ENCODE measurements at regions of chr3 and their contacts with region 1.

Region 1: GRCh38 chr3:51941798-51942602 is at the starts of genes PARP3 and RRP9:
- DNase-seq: peak; percentile 100
- H3K4me3 Mint-ChIP-seq: peak within 1 kb of the TSS; percentile 87
- H3K27ac Mint-ChIP-seq: peak within 1 kb of the TSS; percentile 83
- H3K4me1 Mint-ChIP-seq: peaks cover 29% of the 10 kb centered on the region
- H3K27me3 Mint-ChIP-seq: no peaks in the 10 kb centered on the region
- total RNA-seq, gene PARP3: 12.1 to 13.4 TPM
- total RNA-seq, gene RRP9: 32.3 to 35.4 TPM

Region 2: DNA sequence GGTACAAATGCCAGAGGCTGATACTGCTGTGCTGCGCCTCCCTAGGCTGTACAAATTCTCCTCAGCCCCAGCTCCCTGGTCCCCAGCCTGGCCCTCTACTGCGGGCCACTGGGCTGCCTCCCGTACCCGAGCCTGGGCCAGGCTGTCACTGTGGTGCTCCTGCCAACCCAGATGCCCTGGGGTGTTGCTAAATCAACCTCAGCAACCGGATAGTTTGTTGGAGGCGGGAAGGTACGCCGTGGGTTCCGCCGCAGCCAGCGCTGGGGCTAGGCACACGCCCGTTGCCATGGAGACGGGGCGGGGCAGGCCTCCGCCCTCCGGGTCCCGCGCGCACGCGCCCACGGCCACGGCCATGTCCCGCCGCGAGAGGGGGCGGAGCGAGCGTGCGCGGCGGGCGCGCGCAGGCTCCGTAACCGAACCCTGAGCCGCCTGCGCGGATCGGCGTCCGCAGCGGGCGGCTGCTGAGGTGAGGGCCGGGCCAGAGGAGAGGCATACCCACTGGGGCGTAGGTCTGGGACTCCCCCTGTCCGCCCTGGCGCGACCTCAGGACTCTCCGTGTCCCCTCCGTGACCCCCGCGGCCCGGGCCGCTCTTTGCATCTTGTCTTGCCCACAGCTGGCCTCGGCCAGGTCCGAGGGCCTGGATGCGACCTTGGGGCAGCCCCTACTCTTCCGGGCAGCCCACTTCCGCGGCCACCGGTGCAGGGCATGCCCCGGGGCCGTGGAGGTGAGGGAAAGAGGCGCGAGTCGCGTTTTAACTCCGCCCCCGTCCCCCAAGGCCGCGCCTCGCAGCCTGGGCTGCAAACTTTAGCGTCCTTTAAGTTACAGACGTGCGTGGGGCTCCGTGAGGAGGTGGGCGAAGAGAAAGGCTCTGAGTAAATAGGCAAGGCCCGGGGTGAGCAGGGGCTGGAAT is 270.9 kb before region 1 on chr3 and contains the start of gene TEX264:
- CTCF ChIA-PET with region 1: no interaction called
- POLR2A ChIA-PET with region 1: no interaction called
- intact Hi-C with region 1: loop called (anchors 10 kb)
- DNase-seq: peak; percentile 92
- H3K4me3 Mint-ChIP-seq: peak within 1 kb of the TSS; percentile 87
- H3K27ac Mint-ChIP-seq: peak within 1 kb of the TSS; percentile 89
- H3K4me1 Mint-ChIP-seq: peaks cover 62% of the 10 kb centered on the region
- H3K27me3 Mint-ChIP-seq: no peaks in the 10 kb centered on the region
- total RNA-seq, gene TEX264: 44.9 to 45.2 TPM

Region 3: DNA sequence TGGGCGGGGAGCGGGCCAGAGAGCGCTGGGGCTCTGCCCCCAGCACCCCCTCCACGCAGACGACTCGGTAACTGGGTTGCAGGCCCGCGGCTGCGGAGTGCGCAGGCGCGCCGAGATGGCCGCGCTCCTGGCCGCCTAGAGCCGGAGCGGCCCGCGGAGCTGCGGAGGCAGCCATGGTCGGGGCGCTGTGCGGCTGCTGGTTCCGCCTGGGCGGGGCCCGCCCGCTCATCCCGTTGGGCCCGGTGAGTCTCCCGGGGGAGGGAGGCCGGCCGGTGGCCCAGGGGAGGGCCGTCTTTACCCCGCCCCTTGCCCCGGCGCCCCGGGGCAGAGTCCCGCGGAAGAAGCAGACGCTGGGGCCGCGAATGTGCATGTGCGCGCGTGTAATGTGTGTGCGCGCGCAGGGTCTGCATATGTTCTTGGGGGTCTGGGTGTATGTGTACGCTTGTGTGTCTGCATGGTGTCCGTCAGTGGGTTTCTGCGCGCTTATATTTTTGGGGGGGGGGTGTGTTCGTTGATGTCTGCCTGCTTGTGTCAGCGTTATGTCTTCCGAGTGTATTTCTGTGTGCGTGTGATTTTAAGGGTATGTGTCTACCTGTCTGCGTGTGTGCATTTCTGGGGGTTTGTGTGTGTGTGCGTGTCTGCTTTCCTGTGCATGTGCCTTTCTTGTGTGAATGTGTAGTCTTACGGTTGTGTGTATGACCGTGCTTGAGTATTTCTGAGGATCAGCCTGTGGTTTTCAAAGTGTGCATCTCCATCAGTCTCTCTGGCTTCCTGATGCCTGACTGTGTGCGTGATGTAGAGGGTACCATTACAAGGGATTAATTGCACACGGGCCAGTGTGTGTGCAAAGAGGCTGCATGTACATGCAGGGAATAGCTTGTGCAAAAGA is 33.2 kb after region 1 on chr3 and contains the start of gene ABHD14A:
- CTCF ChIA-PET with region 1: interaction called, 64 read pairs
- POLR2A ChIA-PET with region 1: interaction called, 20 read pairs
- intact Hi-C with region 1: loop called (anchors 1 kb)
- DNase-seq: peak; percentile 79
- H3K4me3 Mint-ChIP-seq: peak within 1 kb of the TSS; percentile 99
- H3K27ac Mint-ChIP-seq: peak within 1 kb of the TSS; percentile 97
- H3K4me1 Mint-ChIP-seq: peaks cover 36% of the 10 kb centered on the region
- H3K27me3 Mint-ChIP-seq: no peaks in the 10 kb centered on the region
- total RNA-seq, gene ABHD14A: 7.9 to 8.6 TPM

Region 4: DNA sequence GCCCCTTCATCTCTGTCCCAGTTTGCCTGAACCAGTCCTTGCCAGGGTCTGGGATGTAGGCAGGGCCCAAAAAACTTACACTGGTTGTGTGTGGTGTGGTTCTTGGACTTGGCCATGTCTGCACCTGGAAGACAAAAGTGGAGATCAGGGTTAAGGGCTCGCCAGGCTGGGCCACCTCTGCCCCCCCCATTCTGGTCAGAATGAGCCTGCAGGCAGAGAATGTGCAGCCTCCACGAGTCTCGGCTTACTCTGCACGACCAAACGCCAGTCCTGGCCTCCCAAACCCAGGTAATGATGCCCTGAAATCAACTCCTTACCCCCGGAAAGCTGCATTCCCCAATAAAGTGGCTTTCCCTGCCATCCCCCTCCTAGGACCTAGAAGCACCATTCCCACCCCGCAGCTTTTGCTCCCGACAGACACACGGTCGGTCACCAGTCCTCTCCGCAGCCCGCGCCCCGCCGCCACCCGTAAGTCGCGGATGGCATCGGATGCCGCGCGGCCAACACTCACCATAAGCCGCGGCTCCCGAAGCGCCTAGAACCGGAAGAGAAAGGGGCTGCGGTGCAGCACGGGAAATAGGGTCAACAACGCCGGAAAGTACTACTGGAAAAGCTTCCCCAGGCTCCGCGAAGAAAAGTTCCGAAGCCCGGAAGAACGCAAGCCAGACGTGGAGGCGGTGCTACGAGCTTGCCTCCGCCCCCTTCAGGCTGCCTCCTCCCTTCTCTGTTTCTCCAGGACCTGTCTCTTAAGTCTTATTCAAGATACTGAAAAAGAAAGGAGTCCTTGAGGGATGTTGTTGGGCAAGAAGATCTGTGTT is 53.6 kb after region 1 on chr3 and contains the start of gene RPL29:
- CTCF ChIA-PET with region 1: interaction called, 12 read pairs
- POLR2A ChIA-PET with region 1: interaction called, 6 read pairs
- intact Hi-C with region 1: loop called (anchors 1 kb)
- DNase-seq: peak; percentile 96
- H3K4me3 Mint-ChIP-seq: peak within 1 kb of the TSS; percentile 98
- H3K27ac Mint-ChIP-seq: peak within 1 kb of the TSS; percentile 99
- H3K4me1 Mint-ChIP-seq: peaks cover 34% of the 10 kb centered on the region
- H3K27me3 Mint-ChIP-seq: no peaks in the 10 kb centered on the region
- total RNA-seq, gene RPL29: 1,502 to 1,507 TPM

Region 5: GRCh38 chr3:52123106-52123725 is 181.2 kb after region 1 on chr3:
- CTCF ChIA-PET with region 1: interaction called, 3 read pairs
- POLR2A ChIA-PET with region 1: no interaction called
- intact Hi-C with region 1: loop called (anchors 5 kb)
- DNase-seq: peak; percentile 78
- H3K4me3 Mint-ChIP-seq: no peak overlapping the region
- H3K27ac Mint-ChIP-seq: no peak overlapping the region
- H3K4me1 Mint-ChIP-seq: peaks cover 4% of the 10 kb centered on the region
- H3K27me3 Mint-ChIP-seq: no peaks in the 10 kb centered on the region

Region 6: GRCh38 chr3:52154117-52155094 is 212.4 kb after region 1 on chr3 and contains the start of gene POC1A:
- CTCF ChIA-PET with region 1: no interaction called
- POLR2A ChIA-PET with region 1: no interaction called
- intact Hi-C with region 1: loop called (anchors 1 kb)
- DNase-seq: peak; percentile 94
- H3K4me3 Mint-ChIP-seq: peak within 1 kb of the TSS; percentile 88
- H3K27ac Mint-ChIP-seq: peak within 1 kb of the TSS; percentile 89
- H3K4me1 Mint-ChIP-seq: peaks cover 20% of the 10 kb centered on the region
- H3K27me3 Mint-ChIP-seq: no peaks in the 10 kb centered on the region
- total RNA-seq, gene POC1A: 28.5 to 30.5 TPM